GM12878 (cell line): ENCODE measurements at regions of chr19 and their contacts with region 1.

Region 1: DNA sequence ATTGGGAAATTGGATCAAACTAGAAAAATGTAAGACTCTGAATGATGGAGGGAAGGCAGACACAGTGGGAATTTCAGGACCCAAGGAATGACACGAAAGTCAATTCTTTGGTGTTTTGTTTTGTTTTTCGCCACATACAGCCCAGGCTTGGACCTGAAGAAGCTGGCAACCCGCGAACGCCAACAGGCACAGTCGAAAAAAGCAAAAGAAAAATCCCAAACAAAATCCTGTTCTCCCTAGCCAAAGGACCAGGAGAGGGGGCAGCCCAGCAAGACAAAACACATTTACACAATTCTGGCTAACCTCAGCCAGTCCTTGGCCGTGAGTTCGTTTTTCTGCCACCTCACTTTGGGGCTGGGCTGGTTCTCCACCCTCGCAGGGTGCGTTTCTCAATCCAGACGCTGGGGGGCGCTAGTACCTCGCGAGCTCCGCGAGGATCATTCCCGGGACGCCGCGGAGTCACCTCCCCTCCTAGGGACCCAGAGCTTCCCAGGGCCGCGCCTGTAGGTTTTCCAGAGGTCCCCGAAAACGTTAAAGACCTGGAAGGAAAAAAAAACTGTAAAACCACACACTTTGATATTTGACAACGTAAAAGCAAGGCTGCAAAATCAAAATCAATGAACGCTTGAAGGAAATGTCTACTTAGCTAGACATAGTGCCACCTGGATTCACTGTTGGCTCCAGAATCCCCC is 34.9 kb upstream of the TPM4 start:
- DNase-seq: no peak
- ATAC-seq: peak; percentile 91
- H3K4me3 ChIP-seq: no peak overlapping the region
- H3K27ac ChIP-seq: no peak overlapping the region
- H3K4me1 ChIP-seq: no peaks in the 10 kb centered on the region
- H3K27me3 ChIP-seq: no peaks in the 10 kb centered on the region
- CTCF ChIP-seq: peak; percentile 92 to 93 (median 92)
- EP300 ChIP-seq: no peak
- POLR2A ChIP-seq: no peak
- RAD21 ChIP-seq: peak; percentile 88

Region 2: DNA sequence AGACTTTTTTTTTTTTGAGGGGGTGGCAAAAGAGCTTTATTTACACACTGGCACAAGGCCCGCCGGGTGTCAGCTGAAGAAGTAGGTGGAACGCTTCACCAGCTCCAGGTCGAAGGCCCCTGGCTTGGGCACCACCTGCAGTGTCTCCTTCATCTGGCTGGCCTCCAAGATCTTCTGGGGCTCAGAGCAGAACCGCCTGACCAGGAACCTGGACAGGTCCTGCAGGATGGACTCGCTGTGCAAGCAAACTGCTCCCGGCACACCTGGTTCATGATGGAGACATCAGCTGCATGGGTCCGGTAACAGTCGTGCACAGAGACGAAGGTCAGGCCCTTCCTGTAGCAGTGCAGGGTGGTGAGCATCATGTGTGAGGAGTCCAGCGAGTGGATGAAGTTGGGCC is 139.2 kb before region 1 on chr19:
- CTCF ChIA-PET with region 1: no interaction called
- POLR2A ChIA-PET with region 1: no interaction called
- RAD21 ChIA-PET with region 1: no interaction called
- SMC1A ChIA-PET with region 1: no interaction called
- in situ Hi-C with region 1: no loop called
- intact Hi-C with region 1: no loop called
- DNase-seq: no peak
- ATAC-seq: no peak
- H3K4me3 ChIP-seq: no peak overlapping the region
- H3K27ac ChIP-seq: no peak overlapping the region
- H3K4me1 ChIP-seq: no peaks in the 10 kb centered on the region
- H3K27me3 ChIP-seq: peaks cover 0 to 3% of the 10 kb centered on the region in 2 experiments; a peak in 1 of 4 replicates
- CTCF ChIP-seq: no peak
- EP300 ChIP-seq: no peak
- POLR2A ChIP-seq: no peak
- RAD21 ChIP-seq: no peak

Region 3: DNA sequence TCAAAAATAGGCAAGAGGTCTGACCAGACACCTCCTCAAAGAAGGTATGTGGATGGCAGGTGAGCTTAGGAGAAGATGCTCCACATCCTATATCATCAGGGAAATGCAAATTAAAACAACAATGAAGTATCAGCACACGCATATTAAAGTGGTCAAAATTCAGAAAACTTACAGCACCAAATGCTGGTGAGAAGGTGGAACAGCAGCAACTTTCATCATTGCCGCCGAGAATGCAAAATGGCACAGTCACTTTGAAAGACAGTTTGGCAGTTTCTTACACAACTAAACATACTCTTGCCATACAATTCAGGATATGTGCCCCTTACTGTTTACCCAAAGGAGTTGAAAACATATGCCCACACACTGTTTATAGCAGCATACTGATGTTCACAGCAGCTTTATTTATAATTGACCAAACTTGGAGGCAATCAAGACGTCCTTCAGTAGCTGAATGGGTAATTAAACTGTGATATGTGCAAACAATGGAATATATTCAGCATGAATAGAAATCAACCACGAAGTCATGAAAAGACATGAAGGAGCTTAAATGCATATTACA is 70.1 kb before region 1 on chr19:
- CTCF ChIA-PET with region 1: no interaction called
- POLR2A ChIA-PET with region 1: no interaction called
- RAD21 ChIA-PET with region 1: no interaction called
- SMC1A ChIA-PET with region 1: no interaction called
- in situ Hi-C with region 1: no loop called
- intact Hi-C with region 1: no loop called
- DNase-seq: no peak
- ATAC-seq: no peak
- H3K4me3 ChIP-seq: no peak overlapping the region
- H3K27ac ChIP-seq: no peak overlapping the region
- H3K4me1 ChIP-seq: no peaks in the 10 kb centered on the region
- H3K27me3 ChIP-seq: no peaks in the 10 kb centered on the region
- CTCF ChIP-seq: peak in 2 of 3 experiments; percentile 9 to 39; a peak in 1 of 6 replicates
- EP300 ChIP-seq: no peak
- POLR2A ChIP-seq: no peak
- RAD21 ChIP-seq: peak; percentile 20; the same call in 1 of the 2 replicates

Region 4: GRCh38 chr19:16057062-16057461 is 15.6 kb after region 1 on chr19:
- CTCF ChIA-PET with region 1: interaction called, 24 read pairs
- POLR2A ChIA-PET with region 1: no interaction called
- RAD21 ChIA-PET with region 1: no interaction called
- SMC1A ChIA-PET with region 1: interaction called, 5 read pairs
- in situ Hi-C with region 1: no loop called
- intact Hi-C with region 1: no loop called
- DNase-seq: no peak
- ATAC-seq: no peak
- H3K4me3 ChIP-seq: no peak overlapping the region
- H3K27ac ChIP-seq: no peak overlapping the region
- H3K4me1 ChIP-seq: no peaks in the 10 kb centered on the region
- H3K27me3 ChIP-seq: no peaks in the 10 kb centered on the region
- CTCF ChIP-seq: no peak
- EP300 ChIP-seq: no peak
- POLR2A ChIP-seq: no peak
- RAD21 ChIP-seq: no peak

Region 5: GRCh38 chr19:16062789-16063188 is 21.3 kb after region 1 on chr19:
- CTCF ChIA-PET with region 1: interaction called, 24 read pairs
- POLR2A ChIA-PET with region 1: no interaction called
- RAD21 ChIA-PET with region 1: interaction called, 14 read pairs
- SMC1A ChIA-PET with region 1: interaction called, 12 read pairs
- in situ Hi-C with region 1: no loop called
- intact Hi-C with region 1: no loop called
- DNase-seq: no peak
- ATAC-seq: peak; percentile 77
- H3K4me3 ChIP-seq: no peak overlapping the region
- H3K27ac ChIP-seq: no peak overlapping the region
- H3K4me1 ChIP-seq: peaks cover 6% of the 10 kb centered on the region; the same call in 1 of the 2 replicates
- H3K27me3 ChIP-seq: no peaks in the 10 kb centered on the region
- CTCF ChIP-seq: peak; percentile 60 to 95 (median 91)
- EP300 ChIP-seq: no peak
- POLR2A ChIP-seq: no peak
- RAD21 ChIP-seq: peak; percentile 25

Region 6: GRCh38 chr19:16118489-16119033 is 77.1 kb after region 1 on chr19:
- CTCF ChIA-PET with region 1: interaction called, 26 read pairs
- POLR2A ChIA-PET with region 1: no interaction called
- RAD21 ChIA-PET with region 1: no interaction called
- SMC1A ChIA-PET with region 1: interaction called, 4 read pairs
- in situ Hi-C with region 1: no loop called
- intact Hi-C with region 1: no loop called
- DNase-seq: peak; percentile 97
- ATAC-seq: peak; percentile 82
- H3K4me3 ChIP-seq: peak overlapping the region; percentile 59; the same call in 1 of the 2 replicates
- H3K27ac ChIP-seq: peak overlapping the region; percentile 100
- H3K4me1 ChIP-seq: peaks cover 62% of the 10 kb centered on the region
- H3K27me3 ChIP-seq: no peaks in the 10 kb centered on the region
- CTCF ChIP-seq: no peak
- EP300 ChIP-seq: peak; percentile 95 to 99
- POLR2A ChIP-seq: peak; percentile 80
- RAD21 ChIP-seq: no peak

Region 7: GRCh38 chr19:16836115-16837034 is 794.9 kb after region 1 on chr19:
- CTCF ChIA-PET with region 1: no interaction called
- POLR2A ChIA-PET with region 1: no interaction called
- RAD21 ChIA-PET with region 1: no interaction called
- SMC1A ChIA-PET with region 1: no interaction called
- in situ Hi-C with region 1: no loop called
- intact Hi-C with region 1: no loop called
- DNase-seq: peak; percentile 46
- ATAC-seq: peak; percentile 95
- H3K4me3 ChIP-seq: no peak overlapping the region
- H3K27ac ChIP-seq: peak overlapping the region; percentile 49
- H3K4me1 ChIP-seq: peaks cover 27% of the 10 kb centered on the region
- H3K27me3 ChIP-seq: no peaks in the 10 kb centered on the region
- CTCF ChIP-seq: peak; percentile 51 to 85 (median 61)
- EP300 ChIP-seq: no peak; a peak in 1 of 4 replicates
- POLR2A ChIP-seq: peak; percentile 49
- RAD21 ChIP-seq: peak; percentile 69